Heart right ventricle (tissue), 16 donors: ENCODE measurements at regions of chr3 and their contacts with region 1.

Region 1: DNA sequence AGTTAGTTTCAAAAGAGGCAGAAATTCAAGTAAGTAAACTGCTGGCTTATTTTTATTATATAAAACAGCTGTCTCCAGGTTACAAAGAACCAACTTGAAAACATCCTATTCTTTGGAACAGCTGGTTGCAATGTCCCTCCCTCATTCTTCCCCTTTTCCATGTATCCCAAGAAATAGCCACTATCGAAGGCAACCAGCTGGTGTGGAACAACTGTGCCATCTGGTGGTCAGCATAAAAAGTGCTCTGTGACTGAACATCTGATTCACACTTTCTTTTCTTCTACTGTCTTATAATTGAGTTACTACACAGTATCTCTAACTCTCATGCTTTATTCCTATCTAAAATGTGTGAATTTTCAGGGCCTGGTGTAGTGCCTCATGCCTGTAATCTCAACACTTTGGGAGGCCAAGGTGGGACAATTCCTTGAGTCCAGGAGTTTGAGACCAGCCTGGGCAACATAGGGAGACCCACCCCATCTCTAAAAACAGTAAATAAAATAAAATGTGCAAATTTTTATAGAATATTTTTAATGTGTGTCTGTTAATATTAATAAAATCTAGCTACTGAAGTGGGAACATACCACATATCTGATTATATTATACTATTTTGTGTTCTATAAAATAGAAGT is 9.6 kb downstream of the OSBPL11 start:
- DNase-seq: peak in 1 of 2 donors; percentile 63
- ATAC-seq: peak in 7 of 8 donors; percentile 55 to 82 (median 75)
- H3K4me3 ChIP-seq: no peak overlapping the region
- H3K27ac ChIP-seq: no peak overlapping the region
- H3K4me1 ChIP-seq: peaks cover 0 to 52% (median 21%) of the 10 kb centered on the region in 9 donors
- H3K27me3 ChIP-seq: no peaks in the 10 kb centered on the region
- CTCF ChIP-seq: peak; percentile 71 to 94 (median 87)

Region 2: GRCh38 chr3:124928333-124929202 is 657.1 kb before region 1 on chr3:
- intact Hi-C with region 1: loop called in 4 of 10 experiments (anchors 10 kb)
- DNase-seq: peak; percentile 31 to 68
- ATAC-seq: peak in 7 of 8 donors; percentile 42 to 84 (median 68)
- H3K4me3 ChIP-seq: no peak overlapping the region
- H3K27ac ChIP-seq: no peak overlapping the region
- H3K4me1 ChIP-seq: peaks cover 0 to 13% (median 0%) of the 10 kb centered on the region in 9 donors
- H3K27me3 ChIP-seq: no peaks in the 10 kb centered on the region
- CTCF ChIP-seq: peak; percentile 57 to 85 (median 77)

Region 3: GRCh38 chr3:125496701-125497100 is 89.0 kb before region 1 on chr3:
- intact Hi-C with region 1: no loop called
- DNase-seq: no peak
- ATAC-seq: no peak
- H3K4me3 ChIP-seq: no peak overlapping the region
- H3K27ac ChIP-seq: no peak overlapping the region
- H3K4me1 ChIP-seq: no peaks in the 10 kb centered on the region
- H3K27me3 ChIP-seq: no peaks in the 10 kb centered on the region
- CTCF ChIP-seq: no peak

Region 4: DNA sequence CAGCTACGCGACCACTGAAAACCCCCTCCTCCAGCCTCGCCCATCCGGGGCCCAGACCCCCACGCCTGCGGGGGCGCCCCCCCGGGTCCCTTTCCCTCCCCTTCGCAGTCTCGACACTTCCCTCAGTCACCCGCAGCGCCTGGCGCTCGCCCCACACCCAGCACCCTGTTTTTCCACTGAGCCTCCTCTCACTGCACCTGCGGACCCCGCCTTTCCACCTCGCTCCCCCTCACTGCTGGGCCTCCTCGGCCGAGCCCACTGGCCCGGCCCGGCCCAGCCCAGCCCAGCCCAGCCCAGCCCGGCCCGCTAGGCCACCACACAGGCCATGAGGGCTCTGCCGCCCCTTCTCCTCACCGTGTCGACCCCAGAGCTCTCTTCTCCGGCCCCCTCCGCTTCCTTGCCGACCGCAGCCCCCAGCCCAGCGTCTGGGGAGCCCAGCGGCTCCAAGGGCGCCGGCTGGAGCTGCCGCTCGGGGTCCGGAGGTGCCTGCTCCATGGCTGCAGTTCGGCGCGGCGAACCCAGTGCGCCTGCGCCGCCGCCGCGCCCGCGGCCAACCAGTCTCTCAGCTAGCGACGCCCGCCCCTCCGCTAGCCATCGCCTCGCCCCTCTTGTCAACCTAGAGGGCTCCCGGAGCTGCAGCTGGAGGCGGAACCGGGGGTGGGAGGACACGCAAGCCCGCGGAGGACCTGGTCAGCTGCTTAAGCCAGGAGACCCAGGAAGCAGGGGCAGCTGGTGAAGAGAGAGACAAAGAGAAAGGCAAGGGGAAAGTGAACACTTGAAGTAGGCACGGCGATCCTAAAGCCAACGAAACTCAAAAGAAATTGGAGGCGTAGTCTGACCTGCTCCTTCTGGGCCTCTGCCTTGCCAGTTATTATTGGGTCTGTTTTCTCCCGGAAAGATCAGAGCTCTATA is 65.8 kb before region 1 on chr3 and contains the start of gene SNX4:
- intact Hi-C with region 1: loop called in 1 of 10 experiments (anchors 10 kb)
- DNase-seq: peak; percentile 95
- ATAC-seq: peak; percentile 98 to 100 (median 99)
- H3K4me3 ChIP-seq: peak within 1 kb of the TSS; percentile 76 to 97 (median 88)
- H3K27ac ChIP-seq: peak within 1 kb of the TSS; percentile 57 to 92 (median 82)
- H3K4me1 ChIP-seq: peaks cover 0 to 40% (median 26%) of the 10 kb centered on the region in 9 donors
- H3K27me3 ChIP-seq: no peaks in the 10 kb centered on the region
- CTCF ChIP-seq: no peak
- total RNA-seq, gene SNX4: 15.4 to 25.1 (median 18.2) TPM

Region 5: GRCh38 chr3:126098391-126098858 is 512.7 kb after region 1 on chr3:
- intact Hi-C with region 1: no loop called
- DNase-seq: no peak
- ATAC-seq: no peak
- H3K4me3 ChIP-seq: no peak overlapping the region
- H3K27ac ChIP-seq: no peak overlapping the region
- H3K4me1 ChIP-seq: peaks cover 9 to 35% (median 26%) of the 10 kb centered on the region in 9 donors
- H3K27me3 ChIP-seq: no peaks in the 10 kb centered on the region
- CTCF ChIP-seq: no peak